Activated CD4-positive, alpha-beta T cell treated with anti-CD3 and anti-CD28 coated beads, Interleukin-2, amount 10 ng/mL, durations not matched to agents 24 days and 14 days (primary cell): ENCODE measurements at regions of chr1 and their contacts with region 1.

Region 1: GRCh38 chr1:234271243-234271606 is 102.0 kb upstream of the COA6 start:
- DNase-seq: no peak
- H3K4me3 Mint-ChIP-seq: peak overlapping the region; percentile 2
- H3K27ac Mint-ChIP-seq: peak overlapping the region; percentile 49
- H3K4me1 Mint-ChIP-seq: peaks cover 27% of the 10 kb centered on the region
- H3K27me3 Mint-ChIP-seq: peaks cover 4% of the 10 kb centered on the region

Region 2: GRCh38 chr1:234212764-234213657 is 58.2 kb before region 1 on chr1:
- intact Hi-C with region 1: loop called (anchors 2 kb)
- DNase-seq: peak; percentile 75
- H3K4me3 Mint-ChIP-seq: peak overlapping the region; percentile 86
- H3K27ac Mint-ChIP-seq: no peak overlapping the region
- H3K4me1 Mint-ChIP-seq: peaks cover 34% of the 10 kb centered on the region
- H3K27me3 Mint-ChIP-seq: peaks cover 22% of the 10 kb centered on the region

Region 3: DNA sequence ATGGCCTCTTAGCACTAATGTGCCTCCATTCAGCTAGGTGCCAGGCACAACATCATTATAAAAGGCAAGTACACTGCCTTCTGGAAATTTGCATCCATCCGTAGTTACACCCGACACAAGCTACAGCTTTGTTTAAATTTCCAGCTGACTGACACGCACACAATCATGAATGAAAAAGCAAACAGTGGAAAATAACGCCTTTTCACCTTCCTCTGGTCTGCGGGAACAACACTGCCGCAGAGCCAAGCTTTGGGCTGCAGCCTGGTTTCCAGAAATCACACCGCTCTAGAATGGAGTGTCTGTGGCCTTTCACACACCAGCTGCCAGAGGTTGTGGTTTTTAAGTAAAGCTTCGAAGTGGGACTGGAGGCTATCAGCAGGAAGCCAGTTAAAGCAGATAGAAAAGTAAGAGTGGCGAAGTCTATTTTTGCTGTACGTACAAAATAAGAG is 40.8 kb before region 1 on chr1:
- intact Hi-C with region 1: loop called (anchors 5 kb)
- DNase-seq: peak; percentile 80
- H3K4me3 Mint-ChIP-seq: peak overlapping the region; percentile 42
- H3K27ac Mint-ChIP-seq: peak overlapping the region; percentile 39
- H3K4me1 Mint-ChIP-seq: peaks cover 15% of the 10 kb centered on the region
- H3K27me3 Mint-ChIP-seq: peaks cover 18% of the 10 kb centered on the region

Region 4: DNA sequence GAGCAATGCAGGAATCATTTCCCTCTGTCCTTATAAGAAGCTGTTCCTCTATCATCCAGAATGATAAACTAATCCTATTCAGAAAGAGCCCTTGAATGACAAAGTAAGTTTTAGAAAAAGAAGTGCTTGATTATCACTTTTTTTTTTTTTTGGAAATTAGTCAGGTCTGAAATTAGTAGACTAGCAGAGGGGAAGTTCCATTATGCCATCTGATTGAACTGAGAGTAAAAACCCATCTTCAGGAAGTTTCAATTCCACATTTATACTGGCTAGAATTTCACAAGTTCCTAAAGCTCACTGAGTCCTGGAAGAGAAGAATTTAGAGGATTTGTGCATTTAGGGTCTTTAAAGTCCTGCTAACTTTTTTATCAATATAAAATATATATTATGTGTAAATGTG is 26.7 kb before region 1 on chr1:
- intact Hi-C with region 1: loop called (anchors 2 kb)
- DNase-seq: no peak
- H3K4me3 Mint-ChIP-seq: no peak overlapping the region
- H3K27ac Mint-ChIP-seq: no peak overlapping the region
- H3K4me1 Mint-ChIP-seq: peaks cover 12% of the 10 kb centered on the region
- H3K27me3 Mint-ChIP-seq: peaks cover 2% of the 10 kb centered on the region